ENCODE measurements at regions of chr2 and their contacts with region 1.

Region 1: GRCh38 chr2:167069855-167070254 is 181.6 kb downstream of the XIRP2 start:
- DNase-seq: no peak
- H3K4me3 ChIP-seq: no peak overlapping the region
- H3K27ac ChIP-seq: no peak overlapping the region
- H3K4me1 ChIP-seq: no peaks in the 10 kb centered on the region
- H3K27me3 ChIP-seq: no peaks in the 10 kb centered on the region
- CTCF ChIP-seq: no peak
- EP300 ChIP-seq: no peak
- POLR2A ChIP-seq: no peak

Region 2: GRCh38 chr2:166727095-166727494 is 342.8 kb before region 1 on chr2:
- intact Hi-C with region 1: loop called in 1 of 4 experiments (anchors 5 kb)
- DNase-seq: no peak
- H3K4me3 ChIP-seq: no peak overlapping the region
- H3K27ac ChIP-seq: no peak overlapping the region
- H3K4me1 ChIP-seq: no peaks in the 10 kb centered on the region
- H3K27me3 ChIP-seq: no peaks in the 10 kb centered on the region
- CTCF ChIP-seq: no peak
- EP300 ChIP-seq: no peak
- POLR2A ChIP-seq: no peak

Region 3: DNA sequence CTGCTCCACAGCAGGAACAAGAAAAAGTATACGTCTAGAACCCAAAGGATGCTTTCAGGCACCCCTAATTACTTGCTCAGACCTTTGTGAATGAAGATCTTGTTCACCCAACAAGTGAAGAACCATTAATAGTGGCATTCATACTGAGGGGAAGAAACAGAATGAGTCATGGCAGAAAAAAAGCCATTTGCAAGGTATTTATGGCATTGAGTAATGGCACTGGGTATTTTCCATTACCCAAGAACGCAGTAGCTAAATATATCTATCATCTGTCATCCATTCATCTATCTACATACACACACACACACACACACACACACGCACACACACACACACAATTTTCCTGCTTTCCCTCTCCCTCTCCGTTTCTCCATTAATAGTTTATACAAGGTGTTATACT is 237.9 kb before region 1 on chr2:
- intact Hi-C with region 1: no loop called
- DNase-seq: no peak
- H3K4me3 ChIP-seq: no peak overlapping the region
- H3K27ac ChIP-seq: no peak overlapping the region
- H3K4me1 ChIP-seq: no peaks in the 10 kb centered on the region
- H3K27me3 ChIP-seq: no peaks in the 10 kb centered on the region
- CTCF ChIP-seq: no peak
- EP300 ChIP-seq: no peak
- POLR2A ChIP-seq: no peak

Region 4: GRCh38 chr2:167440382-167440781 is 370.5 kb after region 1 on chr2:
- intact Hi-C with region 1: no loop called
- DNase-seq: no peak
- H3K4me3 ChIP-seq: no peak overlapping the region
- H3K27ac ChIP-seq: no peak overlapping the region
- H3K4me1 ChIP-seq: no peaks in the 10 kb centered on the region
- H3K27me3 ChIP-seq: no peaks in the 10 kb centered on the region
- CTCF ChIP-seq: no peak
- EP300 ChIP-seq: no peak
- POLR2A ChIP-seq: no peak

Measured in ovary (tissue), 10 donors.